CD8-positive, alpha-beta T cell (primary cell): ENCODE measurements at regions of chr3 and their contacts with region 1.

Region 1: DNA sequence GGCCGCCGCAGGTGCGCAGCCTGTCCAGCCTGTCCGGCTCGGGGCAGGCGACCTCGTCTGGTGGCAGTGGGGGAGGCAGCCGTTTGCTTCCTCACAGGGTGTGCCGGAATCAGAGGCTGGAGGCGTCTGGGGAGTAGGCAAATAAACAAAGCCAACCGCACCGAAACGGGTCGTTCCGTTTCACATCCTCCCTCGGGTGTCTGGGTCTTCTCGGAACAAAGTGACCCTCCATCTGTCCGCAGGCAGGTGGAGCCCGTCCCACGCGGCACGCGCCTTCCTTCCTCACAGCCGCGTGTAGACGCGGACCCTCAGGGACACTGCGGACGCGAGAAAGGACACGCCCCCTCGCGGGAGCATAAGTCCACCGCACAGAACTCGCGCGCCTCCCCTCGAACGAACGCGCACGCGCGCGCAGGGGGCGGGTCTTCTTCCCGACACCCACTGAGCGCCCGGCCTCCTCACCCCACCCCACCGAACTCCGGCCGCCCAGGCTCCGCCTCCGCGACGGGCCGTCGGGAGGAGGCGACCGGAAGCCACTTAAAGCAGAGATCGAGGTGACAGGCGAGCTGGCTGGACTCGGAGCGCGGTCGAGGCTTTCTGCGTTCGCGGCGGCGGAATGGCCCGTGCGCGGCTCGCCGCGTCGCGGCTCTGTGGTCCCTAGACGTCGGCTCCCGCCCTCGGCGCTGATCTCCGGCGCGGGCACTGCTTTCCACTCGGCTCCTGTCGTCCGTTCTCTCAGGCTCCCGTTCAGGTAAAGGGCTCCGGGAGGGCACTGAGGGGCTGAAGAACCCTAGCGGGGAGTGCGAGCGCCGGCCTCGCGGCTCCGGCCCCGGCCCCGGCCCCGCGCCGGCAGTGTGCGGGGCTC is at the start of gene TIPARP:
- DNase-seq: peak; percentile 98 to 100 (median 99)
- ATAC-seq: peak; percentile 82
- H3K4me3 ChIP-seq: peak within 1 kb of the TSS; percentile 84 to 95
- H3K4me3 Mint-ChIP-seq: peak within 1 kb of the TSS; percentile 97
- H3K27ac ChIP-seq: peak within 1 kb of the TSS; percentile 79 to 89
- H3K27ac Mint-ChIP-seq: peak within 1 kb of the TSS; percentile 99
- H3K4me1 ChIP-seq: peaks cover 34% of the 10 kb centered on the region
- H3K4me1 Mint-ChIP-seq: peaks cover 47% of the 10 kb centered on the region
- H3K27me3 ChIP-seq: no peaks in the 10 kb centered on the region
- H3K27me3 Mint-ChIP-seq: no peaks in the 10 kb centered on the region
- CTCF ChIP-seq: peak; percentile 36
- total RNA-seq, gene TIPARP: 265 to 268 TPM

Region 2: GRCh38 chr3:155870133-155870944 is 803.9 kb before region 1 on chr3 and contains the start of gene GMPS:
- CTCF ChIA-PET with region 1: no interaction called
- POLR2A ChIA-PET with region 1: no interaction called
- intact Hi-C with region 1: loop called in 1 of 2 experiments (anchors 10 kb)
- DNase-seq: peak; percentile 90 to 97 (median 95)
- ATAC-seq: peak; percentile 93
- H3K4me3 ChIP-seq: peak within 1 kb of the TSS; percentile 75 to 80
- H3K4me3 Mint-ChIP-seq: peak within 1 kb of the TSS; percentile 95
- H3K27ac ChIP-seq: peak within 1 kb of the TSS; percentile 72 to 93
- H3K27ac Mint-ChIP-seq: peak within 1 kb of the TSS; percentile 95
- H3K4me1 ChIP-seq: peaks cover 24% of the 10 kb centered on the region
- H3K4me1 Mint-ChIP-seq: peaks cover 33% of the 10 kb centered on the region
- H3K27me3 ChIP-seq: no peaks in the 10 kb centered on the region
- H3K27me3 Mint-ChIP-seq: no peaks in the 10 kb centered on the region
- CTCF ChIP-seq: peak; percentile 32
- total RNA-seq, gene GMPS: 29.6 to 31.7 TPM

Region 3: DNA sequence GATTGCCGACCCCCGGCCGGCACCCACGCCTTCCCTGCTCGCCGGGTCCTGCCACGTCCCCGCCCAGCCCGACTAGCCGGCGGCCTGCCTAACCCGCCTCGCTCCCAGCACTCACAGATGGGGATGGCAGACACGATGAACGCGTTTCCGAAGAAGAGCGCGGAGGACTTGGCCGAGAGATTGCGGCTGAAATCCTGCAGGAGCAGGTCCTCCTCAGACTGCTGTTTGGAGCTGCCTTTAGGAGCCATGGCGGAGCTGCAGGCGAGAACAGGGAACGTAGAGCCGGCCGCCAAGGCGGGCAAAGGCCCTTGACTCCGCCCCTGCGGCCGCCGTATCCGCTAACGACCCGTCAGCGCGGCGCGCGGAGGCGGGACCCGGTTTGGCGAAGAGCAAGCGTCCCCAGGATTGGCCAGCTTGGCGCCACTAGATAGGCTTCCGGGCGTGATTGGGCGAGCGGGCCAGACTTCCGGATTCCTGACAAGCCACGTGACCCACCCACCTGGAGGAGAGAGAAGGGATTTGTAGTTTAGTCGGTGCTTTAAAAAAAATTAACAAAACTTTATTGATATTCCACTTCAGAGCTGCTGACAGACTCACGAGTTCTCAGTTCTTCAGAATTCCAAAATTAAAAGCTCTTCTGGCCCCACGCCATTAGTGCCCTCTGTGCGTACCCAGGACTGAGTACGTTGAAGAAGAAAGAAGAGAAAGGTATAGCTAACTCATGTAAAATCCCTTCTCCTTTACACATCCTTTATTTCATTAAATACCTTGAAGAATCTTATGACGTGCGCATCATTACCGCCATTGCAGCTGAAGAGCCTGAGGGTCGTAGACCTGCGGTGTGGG is 119.2 kb before region 1 on chr3 and contains the start of gene SSR3:
- CTCF ChIA-PET with region 1: interaction called, 7 read pairs
- POLR2A ChIA-PET with region 1: interaction called, 52 read pairs
- intact Hi-C with region 1: loop called (anchors 1 kb)
- DNase-seq: peak; percentile 98 to 99 (median 98)
- ATAC-seq: peak; percentile 98
- H3K4me3 ChIP-seq: peak within 1 kb of the TSS; percentile 87 to 98
- H3K4me3 Mint-ChIP-seq: peak within 1 kb of the TSS; percentile 97
- H3K27ac ChIP-seq: peak within 1 kb of the TSS; percentile 76 to 89
- H3K27ac Mint-ChIP-seq: peak within 1 kb of the TSS; percentile 94
- H3K4me1 ChIP-seq: peaks cover 20% of the 10 kb centered on the region
- H3K4me1 Mint-ChIP-seq: peaks cover 49% of the 10 kb centered on the region
- H3K27me3 ChIP-seq: no peaks in the 10 kb centered on the region
- H3K27me3 Mint-ChIP-seq: no peaks in the 10 kb centered on the region
- CTCF ChIP-seq: peak; percentile 27
- total RNA-seq, gene SSR3: 81.4 to 82.5 TPM

Region 4: DNA sequence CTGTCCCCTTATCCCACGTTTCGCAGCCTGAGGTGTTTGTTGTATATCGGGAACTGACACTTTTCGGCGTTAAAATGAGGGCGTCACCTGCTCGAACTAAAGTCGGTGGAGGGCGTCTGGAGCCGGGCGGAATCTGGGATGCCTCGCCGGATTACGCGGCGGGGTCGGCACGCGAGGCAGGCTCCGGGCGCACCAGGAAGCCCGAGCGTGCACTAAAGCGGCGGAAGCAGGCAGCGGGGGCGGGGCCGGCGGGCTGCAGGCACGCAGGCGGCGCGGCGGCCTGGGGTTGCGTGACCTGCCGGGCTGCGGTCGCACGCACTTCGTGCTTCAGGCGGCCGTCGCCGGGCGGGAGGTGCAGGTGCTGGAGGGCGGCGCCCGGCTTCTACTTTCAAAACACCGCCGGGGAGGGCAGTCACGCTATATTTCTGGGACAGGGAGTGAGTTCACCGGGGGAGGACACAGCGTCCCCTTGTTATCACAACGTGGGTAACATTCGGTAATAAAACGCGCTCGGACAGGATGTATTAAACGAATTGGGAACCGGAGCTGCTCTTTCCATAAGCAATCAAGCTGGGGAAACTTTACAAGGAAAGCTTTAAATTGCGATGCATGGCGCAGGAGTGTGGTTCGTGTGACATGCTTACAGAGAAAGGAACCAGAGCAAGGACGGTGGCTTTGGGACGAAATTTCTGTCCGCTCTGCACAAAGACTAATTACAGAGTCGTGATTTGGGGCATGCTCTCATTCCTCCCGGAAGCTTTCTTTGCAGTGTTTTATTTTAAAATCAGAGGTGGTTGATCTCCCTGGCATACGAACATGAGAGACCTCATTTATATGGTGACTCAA is 142.7 kb after region 1 on chr3:
- CTCF ChIA-PET with region 1: interaction called, 7 read pairs
- POLR2A ChIA-PET with region 1: interaction called, 11 read pairs
- intact Hi-C with region 1: loop called (anchors 1 kb)
- DNase-seq: peak; percentile 53 to 95 (median 85)
- ATAC-seq: peak; percentile 80
- H3K4me3 ChIP-seq: peak overlapping the region; percentile 75 to 88
- H3K4me3 Mint-ChIP-seq: peak overlapping the region; percentile 95
- H3K27ac ChIP-seq: peak overlapping the region; percentile 73 to 78
- H3K27ac Mint-ChIP-seq: peak overlapping the region; percentile 95
- H3K4me1 ChIP-seq: peaks cover 18% of the 10 kb centered on the region
- H3K4me1 Mint-ChIP-seq: peaks cover 38% of the 10 kb centered on the region
- H3K27me3 ChIP-seq: no peaks in the 10 kb centered on the region
- H3K27me3 Mint-ChIP-seq: no peaks in the 10 kb centered on the region
- CTCF ChIP-seq: no peak

Region 5: GRCh38 chr3:157088601-157089454 is 414.6 kb after region 1 on chr3:
- CTCF ChIA-PET with region 1: interaction called, 24 read pairs
- POLR2A ChIA-PET with region 1: interaction called, 22 read pairs
- intact Hi-C with region 1: loop called in 1 of 2 experiments (anchors 1 kb)
- DNase-seq: peak; percentile 87 to 97 (median 93)
- ATAC-seq: peak; percentile 92
- H3K4me3 ChIP-seq: peak overlapping the region; percentile 96 to 98
- H3K4me3 Mint-ChIP-seq: peak overlapping the region; percentile 88
- H3K27ac ChIP-seq: peak overlapping the region; percentile 88 to 95
- H3K27ac Mint-ChIP-seq: peak overlapping the region; percentile 96
- H3K4me1 ChIP-seq: peaks cover 18% of the 10 kb centered on the region
- H3K4me1 Mint-ChIP-seq: peaks cover 26% of the 10 kb centered on the region
- H3K27me3 ChIP-seq: no peaks in the 10 kb centered on the region
- H3K27me3 Mint-ChIP-seq: no peaks in the 10 kb centered on the region
- CTCF ChIP-seq: no peak

Region 6: GRCh38 chr3:157174649-157175498 is 500.6 kb after region 1 on chr3:
- CTCF ChIA-PET with region 1: no interaction called
- POLR2A ChIA-PET with region 1: interaction called, 18 read pairs
- intact Hi-C with region 1: loop called in 1 of 2 experiments (anchors 1 kb)
- DNase-seq: peak; percentile 94 to 100 (median 98)
- ATAC-seq: peak; percentile 91
- H3K4me3 ChIP-seq: peak overlapping the region; percentile 73 to 89
- H3K4me3 Mint-ChIP-seq: peak overlapping the region; percentile 92
- H3K27ac ChIP-seq: peak overlapping the region; percentile 96 to 98
- H3K27ac Mint-ChIP-seq: peak overlapping the region; percentile 99
- H3K4me1 ChIP-seq: peaks cover 25% of the 10 kb centered on the region
- H3K4me1 Mint-ChIP-seq: peaks cover 30% of the 10 kb centered on the region
- H3K27me3 ChIP-seq: no peaks in the 10 kb centered on the region
- H3K27me3 Mint-ChIP-seq: no peaks in the 10 kb centered on the region
- CTCF ChIP-seq: no peak